ENCODE measurements at regions of chr13 and their contacts with region 1.

Region 1: DNA sequence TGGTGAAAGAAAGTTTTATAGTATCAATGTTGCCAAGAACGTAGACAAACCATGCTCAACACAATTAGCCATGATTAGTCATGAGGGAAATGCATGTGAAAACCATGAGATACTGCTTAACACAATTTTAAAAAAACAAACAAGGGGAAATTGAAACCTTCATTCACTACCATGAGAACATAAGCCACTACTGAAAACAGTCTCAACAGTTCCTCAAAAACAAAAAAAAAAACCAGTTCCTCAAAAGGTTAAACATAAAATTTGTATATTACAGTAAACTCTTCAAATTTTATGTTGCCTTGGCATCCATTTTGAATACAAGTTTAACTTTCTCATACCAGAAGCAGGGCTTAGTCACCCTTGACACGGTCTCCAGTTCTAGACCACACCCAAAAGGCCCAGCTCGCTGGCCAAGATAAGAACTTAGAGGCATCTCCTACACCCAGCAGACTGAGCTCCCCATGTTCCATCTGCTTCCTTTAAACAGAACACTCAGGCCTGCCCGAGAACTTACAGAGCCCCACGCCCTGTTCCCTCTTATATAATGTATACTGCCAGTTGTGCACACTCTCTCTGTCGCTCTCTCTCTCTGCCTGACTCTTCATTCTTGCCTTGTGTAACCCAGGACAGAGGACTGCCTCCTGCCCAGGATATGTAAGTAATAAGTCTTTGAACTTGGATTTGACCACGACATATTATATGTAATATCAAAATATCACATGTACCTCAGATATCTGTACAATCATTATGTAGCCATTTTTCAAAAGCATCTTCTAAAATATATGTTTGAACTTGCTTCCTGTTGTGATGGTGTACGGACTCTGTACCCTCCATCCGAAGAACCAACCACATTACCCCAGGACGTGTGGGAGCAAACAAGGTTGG is 67.4 kb downstream of the STK24 start:
- DNase-seq: peak; percentile 80 to 93 (median 86)
- ATAC-seq: peak; percentile 96
- H3K4me3 ChIP-seq: peak overlapping the region; percentile 16; the same call in 1 of the 2 replicates
- H3K27ac ChIP-seq: peak overlapping the region; percentile 95
- H3K4me1 ChIP-seq: peaks cover 23 to 64% of the 10 kb centered on the region in 2 experiments
- H3K27me3 ChIP-seq: no peaks in the 10 kb centered on the region
- CTCF ChIP-seq: no peak
- EP300 ChIP-seq: peak; percentile 82
- POLR2A ChIP-seq: peak; percentile 57; the same call in 1 of the 2 replicates
- RAD21 ChIP-seq: peak in 1 of 2 experiments; percentile 11; a peak in 1 of 4 replicates

Region 2: GRCh38 chr13:98173431-98174152 is 335.9 kb before region 1 on chr13:
- CTCF ChIA-PET with region 1: no interaction called
- POLR2A ChIA-PET with region 1: no interaction called
- in situ Hi-C with region 1: no loop called
- intact Hi-C with region 1: no loop called
- DNase-seq: no peak
- ATAC-seq: no peak
- H3K4me3 ChIP-seq: no peak overlapping the region
- H3K27ac ChIP-seq: no peak overlapping the region
- H3K4me1 ChIP-seq: peaks cover 0 to 8% of the 10 kb centered on the region in 2 experiments; a peak in 2 of 5 replicates
- H3K27me3 ChIP-seq: peaks cover 11 to 32% of the 10 kb centered on the region in 2 experiments
- CTCF ChIP-seq: no peak
- EP300 ChIP-seq: no peak
- POLR2A ChIP-seq: no peak
- RAD21 ChIP-seq: no peak

Region 3: GRCh38 chr13:98239162-98240076 is 270.1 kb before region 1 on chr13:
- CTCF ChIA-PET with region 1: no interaction called
- POLR2A ChIA-PET with region 1: no interaction called
- in situ Hi-C with region 1: no loop called
- intact Hi-C with region 1: no loop called
- DNase-seq: no peak
- ATAC-seq: no peak
- H3K4me3 ChIP-seq: no peak overlapping the region
- H3K27ac ChIP-seq: no peak overlapping the region
- H3K4me1 ChIP-seq: no peaks in the 10 kb centered on the region
- H3K27me3 ChIP-seq: peaks cover 3 to 7% of the 10 kb centered on the region in 2 experiments; a peak in 1 of 5 replicates
- CTCF ChIP-seq: no peak
- EP300 ChIP-seq: no peak
- POLR2A ChIP-seq: no peak
- RAD21 ChIP-seq: no peak

Region 4: GRCh38 chr13:98484289-98485219 is 25.0 kb before region 1 on chr13:
- CTCF ChIA-PET with region 1: no interaction called
- POLR2A ChIA-PET with region 1: interaction called, 7 read pairs
- in situ Hi-C with region 1: no loop called
- intact Hi-C with region 1: loop called (anchors 2 kb)
- DNase-seq: peak; percentile 46 to 81 (median 58)
- ATAC-seq: peak; percentile 86
- H3K4me3 ChIP-seq: no peak overlapping the region
- H3K27ac ChIP-seq: peak overlapping the region; percentile 86; the same call in 2 of the 3 replicates
- H3K4me1 ChIP-seq: peaks cover 39 to 43% of the 10 kb centered on the region in 2 experiments; a peak in 4 of 5 replicates
- H3K27me3 ChIP-seq: no peaks in the 10 kb centered on the region
- CTCF ChIP-seq: no peak
- EP300 ChIP-seq: no peak
- POLR2A ChIP-seq: no peak
- RAD21 ChIP-seq: no peak

Region 5: GRCh38 chr13:98549006-98549727 is 39.7 kb after region 1 on chr13:
- CTCF ChIA-PET with region 1: no interaction called
- POLR2A ChIA-PET with region 1: no interaction called
- in situ Hi-C with region 1: no loop called
- intact Hi-C with region 1: loop called (anchors 5 kb)
- DNase-seq: no peak
- ATAC-seq: peak; percentile 64
- H3K4me3 ChIP-seq: no peak overlapping the region
- H3K27ac ChIP-seq: no peak overlapping the region; the same call in 2 of the 3 replicates
- H3K4me1 ChIP-seq: peaks cover 4 to 14% of the 10 kb centered on the region in 2 experiments; a peak in 4 of 5 replicates
- H3K27me3 ChIP-seq: no peaks in the 10 kb centered on the region
- CTCF ChIP-seq: no peak
- EP300 ChIP-seq: no peak
- POLR2A ChIP-seq: no peak
- RAD21 ChIP-seq: no peak

Region 6: GRCh38 chr13:98570929-98571372 is 61.4 kb after region 1 on chr13:
- CTCF ChIA-PET with region 1: no interaction called
- POLR2A ChIA-PET with region 1: interaction called, 4 read pairs
- in situ Hi-C with region 1: no loop called
- intact Hi-C with region 1: loop called (anchors 5 kb)
- DNase-seq: peak in 2 of 4 experiments; percentile 21 to 29
- ATAC-seq: peak; percentile 40
- H3K4me3 ChIP-seq: peak overlapping the region; percentile 3; the same call in 1 of the 2 replicates
- H3K27ac ChIP-seq: no peak overlapping the region; the same call in 2 of the 3 replicates
- H3K4me1 ChIP-seq: peaks cover 29 to 37% of the 10 kb centered on the region in 2 experiments
- H3K27me3 ChIP-seq: no peaks in the 10 kb centered on the region
- CTCF ChIP-seq: no peak
- EP300 ChIP-seq: no peak
- POLR2A ChIP-seq: no peak
- RAD21 ChIP-seq: no peak

Measured in K562 (cell line).